Dorsolateral prefrontal cortex (tissue), 120 donors: ENCODE measurements at regions of chr10 and their contacts with region 1.

Region 1: GRCh38 chr10:92839191-92840085 is 8.9 kb upstream of the EXOC6 start:
- DNase-seq: no peak
- H3K4me3 ChIP-seq: no peak overlapping the region
- H3K27ac ChIP-seq: peak overlapping the region in 1 of 59 donors; percentile 51
- H3K27me3 ChIP-seq: no peaks in the 10 kb centered on the region
- CTCF ChIP-seq: peak in 8 of 56 donors; percentile 7 to 30 (median 16)

Region 2: GRCh38 chr10:92689663-92690210 is 149.7 kb before region 1 on chr10 and contains the start of gene HHEX:
- intact Hi-C with region 1: loop called in 1 of 2 experiments (anchors 10 kb)
- DNase-seq: no peak
- H3K4me3 ChIP-seq: peak within 1 kb of the TSS; percentile 15 to 70 (median 53)
- H3K27ac ChIP-seq: peak within 1 kb of the TSS in 54 of 59 donors; percentile 2 to 90 (median 76)
- H3K27me3 ChIP-seq: peaks cover 6 to 71% (median 60%) of the 10 kb centered on the region in 45 donors
- CTCF ChIP-seq: no peak
- total RNA-seq, gene HHEX: 1.1 to 7.3 (median 3.6) TPM

Region 3: GRCh38 chr10:92787557-92788152 is 51.8 kb before region 1 on chr10:
- intact Hi-C with region 1: no loop called
- DNase-seq: no peak
- H3K4me3 ChIP-seq: no peak overlapping the region
- H3K27ac ChIP-seq: no peak overlapping the region
- H3K27me3 ChIP-seq: peaks cover 0 to 6% (median 0%) of the 10 kb centered on the region in 45 donors
- CTCF ChIP-seq: no peak